ENCODE measurements at regions of chr2 and their contacts with region 1.

Region 1: GRCh38 chr2:135573620-135574019 is 42.3 kb downstream of the R3HDM1 start:
- DNase-seq: no peak

Region 2: GRCh38 chr2:135311268-135311667 is 262.4 kb before region 1 on chr2:
- CTCF ChIA-PET with region 1: interaction called, 10 read pairs
- POLR2A ChIA-PET with region 1: no interaction called
- DNase-seq: no peak

Region 3: DNA sequence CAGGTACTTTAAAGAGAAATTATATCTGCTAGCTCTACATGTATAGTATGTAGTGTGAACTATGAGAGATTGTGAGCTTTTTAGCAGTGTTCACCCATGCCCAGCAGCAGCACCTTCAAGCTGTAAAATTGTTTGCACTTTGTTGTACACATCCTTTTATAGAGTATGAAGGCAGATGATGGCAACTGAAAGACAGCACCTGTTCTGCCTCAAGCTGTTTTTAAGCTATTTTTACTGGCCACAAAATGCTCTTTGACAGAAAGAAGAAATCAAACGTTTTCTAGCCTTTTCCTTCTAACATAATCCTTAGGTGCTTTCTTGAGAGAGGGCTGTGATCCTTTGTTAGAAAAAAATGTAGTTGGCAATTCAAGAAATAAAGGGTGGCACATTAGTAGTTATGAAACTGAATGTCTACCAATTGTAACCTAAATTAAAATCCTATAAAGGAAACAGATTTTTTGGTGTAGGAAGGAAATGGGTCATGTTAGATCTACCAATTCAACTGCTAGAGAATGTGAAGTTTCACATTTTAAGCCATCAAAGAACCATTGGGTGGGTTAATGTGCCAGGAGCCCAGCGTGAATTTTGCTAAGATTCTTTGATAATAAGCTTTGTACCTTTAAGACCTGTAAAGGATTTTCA is 17.1 kb after region 1 on chr2:
- CTCF ChIA-PET with region 1: no interaction called
- POLR2A ChIA-PET with region 1: no interaction called
- DNase-seq: no peak

Region 4: GRCh38 chr2:135615404-135615803 is 41.8 kb after region 1 on chr2:
- CTCF ChIA-PET with region 1: no interaction called
- POLR2A ChIA-PET with region 1: no interaction called
- DNase-seq: no peak

Measured in HEK293T (cell line).